ENCODE measurements at regions of chrX and their contacts with region 1.

Region 1: GRCh38 chrX:118459494-118459893 is 36.1 kb upstream of the DOCK11 start:
- H3K4me3 ChIP-seq: no peak overlapping the region
- H3K27ac ChIP-seq: no peak overlapping the region
- H3K4me1 ChIP-seq: no peaks in the 10 kb centered on the region
- CTCF ChIP-seq: peak; percentile 27; the same call in 1 of the 2 replicates

Region 2: GRCh38 chrX:118337687-118338086 is 121.8 kb before region 1 on chrX:
- CTCF ChIA-PET with region 1: no interaction called
- POLR2A ChIA-PET with region 1: no interaction called
- H3K4me3 ChIP-seq: no peak overlapping the region
- H3K27ac ChIP-seq: no peak overlapping the region
- H3K4me1 ChIP-seq: no peaks in the 10 kb centered on the region
- CTCF ChIP-seq: no peak

Region 3: DNA sequence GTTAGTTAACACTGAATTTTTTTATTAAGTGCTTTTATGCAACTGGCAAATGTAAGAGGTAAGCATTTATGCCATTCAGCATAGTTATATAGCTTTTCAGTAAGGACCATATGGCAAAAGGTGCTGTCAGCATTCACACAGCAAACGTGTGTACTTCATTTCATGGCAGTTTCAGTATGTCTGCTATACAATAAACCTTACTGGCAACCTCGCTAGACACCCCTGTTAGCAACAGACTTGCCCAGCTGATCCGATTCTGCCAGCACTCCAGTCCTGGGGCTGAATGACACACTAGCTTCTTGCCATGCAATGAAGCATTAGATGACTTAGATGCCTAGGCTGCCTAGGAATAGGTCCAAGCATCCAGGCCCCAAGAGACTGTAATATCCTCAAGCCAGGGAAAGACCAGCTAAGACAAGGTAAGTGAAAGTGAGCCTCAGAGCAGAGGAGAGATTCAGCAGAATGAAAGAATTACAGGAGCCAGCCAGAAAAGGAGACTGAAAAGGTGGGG is 11.2 kb before region 1 on chrX:
- CTCF ChIA-PET with region 1: interaction called, 13 read pairs
- POLR2A ChIA-PET with region 1: no interaction called
- H3K4me3 ChIP-seq: no peak overlapping the region
- H3K27ac ChIP-seq: no peak overlapping the region
- H3K4me1 ChIP-seq: no peaks in the 10 kb centered on the region
- CTCF ChIP-seq: no peak

Region 4: GRCh38 chrX:118474586-118474985 is 15.1 kb after region 1 on chrX:
- CTCF ChIA-PET with region 1: interaction called, 13 read pairs
- POLR2A ChIA-PET with region 1: no interaction called
- H3K4me3 ChIP-seq: no peak overlapping the region
- H3K27ac ChIP-seq: no peak overlapping the region
- H3K4me1 ChIP-seq: no peaks in the 10 kb centered on the region
- CTCF ChIP-seq: no peak